ENCODE measurements at regions of chr2 and their contacts with region 1.

Region 1: DNA sequence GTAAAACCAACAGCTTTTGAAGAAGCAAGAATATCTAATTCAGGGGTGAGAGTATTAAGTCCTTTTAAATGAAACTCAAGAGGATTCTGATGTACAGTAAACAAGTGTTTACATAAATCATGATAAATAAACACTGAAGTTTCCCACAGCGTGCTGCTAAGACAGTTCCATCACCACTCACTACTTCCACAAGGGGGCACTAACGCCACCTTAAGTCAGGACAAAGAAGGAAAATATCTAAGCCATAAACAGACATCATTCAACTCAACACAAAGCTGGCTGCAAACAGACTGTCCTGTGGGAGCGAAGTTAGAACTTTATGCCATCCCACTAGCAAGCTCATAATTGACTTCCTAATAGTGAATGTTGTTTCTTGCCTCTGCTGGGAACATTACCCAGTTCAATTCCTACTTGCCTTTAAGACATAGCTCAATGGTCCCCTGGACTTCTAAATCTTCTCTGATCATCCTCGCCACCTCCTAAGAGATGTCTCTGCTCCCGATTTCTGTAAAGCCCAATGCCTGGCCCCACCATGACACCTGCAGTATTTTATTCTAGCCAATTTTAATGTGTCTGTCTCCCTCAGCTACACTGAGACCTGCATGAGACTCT is 36.5 kb downstream of the MRPL44 start:
- DNase-seq: peak; percentile 81 to 89 (median 82)
- H3K4me3 ChIP-seq: no peak overlapping the region
- H3K27ac ChIP-seq: no peak overlapping the region
- H3K4me1 ChIP-seq: peaks cover 0 to 2% (median 0%) of the 10 kb centered on the region in 4 experiments
- H3K27me3 ChIP-seq: no peaks in the 10 kb centered on the region

Region 2: GRCh38 chr2:223884399-223884798 is 109.3 kb before region 1 on chr2:
- CTCF ChIA-PET with region 1: no interaction called
- POLR2A ChIA-PET with region 1: no interaction called
- DNase-seq: no peak
- H3K4me3 ChIP-seq: no peak overlapping the region
- H3K27ac ChIP-seq: no peak overlapping the region
- H3K4me1 ChIP-seq: no peaks in the 10 kb centered on the region
- H3K27me3 ChIP-seq: no peaks in the 10 kb centered on the region

Region 3: DNA sequence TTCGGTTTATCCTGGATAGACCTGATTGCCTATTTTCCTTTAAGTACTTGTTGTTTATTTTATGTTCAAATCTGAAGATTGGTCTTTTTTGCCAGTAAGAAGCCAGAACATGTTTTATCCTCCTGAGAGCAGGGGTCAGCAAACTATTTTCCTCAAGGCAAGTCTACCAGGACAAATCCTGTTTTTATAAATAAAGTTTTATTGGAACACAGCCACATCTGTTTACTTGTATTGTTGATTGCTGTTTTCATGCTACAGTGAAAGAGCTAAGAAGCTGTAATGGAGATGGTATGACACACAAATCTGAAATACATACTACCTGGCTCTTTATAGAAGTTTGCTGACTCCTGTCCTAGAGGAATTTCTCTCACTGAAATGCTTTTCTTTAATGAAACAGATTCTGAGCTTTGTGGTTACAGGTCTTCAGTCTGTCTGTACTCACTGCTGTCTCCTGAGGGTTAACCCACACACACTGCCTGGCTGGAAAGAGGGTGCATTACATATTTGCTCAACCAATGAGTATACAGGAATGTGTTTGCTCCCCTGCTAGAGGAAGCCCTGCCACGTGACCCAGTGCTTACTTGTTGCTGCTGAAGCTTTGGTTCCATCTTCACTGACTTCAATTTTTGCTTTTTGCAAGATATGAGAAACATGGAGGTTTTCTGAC is 13.9 kb before region 1 on chr2:
- CTCF ChIA-PET with region 1: interaction called, 13 read pairs
- POLR2A ChIA-PET with region 1: no interaction called
- DNase-seq: no peak
- H3K4me3 ChIP-seq: no peak overlapping the region
- H3K27ac ChIP-seq: no peak overlapping the region
- H3K4me1 ChIP-seq: no peaks in the 10 kb centered on the region
- H3K27me3 ChIP-seq: no peaks in the 10 kb centered on the region

Region 4: DNA sequence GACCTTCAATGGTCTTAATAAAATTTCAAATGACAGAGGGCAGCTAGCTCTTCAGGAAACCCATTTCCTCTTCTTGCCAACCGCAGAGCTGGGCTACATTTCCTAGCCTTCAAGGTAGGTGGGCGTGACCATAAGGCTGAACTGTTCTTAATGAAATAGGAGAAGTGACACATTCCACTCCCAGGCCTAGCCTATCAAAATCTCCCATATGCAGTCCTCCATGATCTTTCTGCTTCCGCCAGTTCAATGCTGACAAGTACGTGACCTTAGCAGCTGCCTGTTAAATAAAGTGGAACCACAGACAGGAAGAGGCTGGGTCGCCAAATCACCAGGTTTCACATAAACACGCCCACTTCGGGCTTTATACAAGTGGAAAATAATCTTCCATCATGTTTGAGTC is 32.1 kb after region 1 on chr2:
- CTCF ChIA-PET with region 1: interaction called, 25 read pairs
- POLR2A ChIA-PET with region 1: no interaction called
- DNase-seq: peak; percentile 97 to 99 (median 98)
- H3K4me3 ChIP-seq: peak overlapping the region in 3 of 7 experiments; percentile 33 to 51 (median 35)
- H3K27ac ChIP-seq: peak overlapping the region in 1 of 2 experiments; percentile 71
- H3K4me1 ChIP-seq: peaks cover 17 to 47% (median 33%) of the 10 kb centered on the region in 4 experiments
- H3K27me3 ChIP-seq: no peaks in the 10 kb centered on the region

Region 5: GRCh38 chr2:224042191-224042696 is 48.5 kb after region 1 on chr2:
- CTCF ChIA-PET with region 1: interaction called, 12 read pairs
- POLR2A ChIA-PET with region 1: no interaction called
- DNase-seq: no peak
- H3K4me3 ChIP-seq: no peak overlapping the region
- H3K27ac ChIP-seq: no peak overlapping the region
- H3K4me1 ChIP-seq: peaks cover 10 to 22% (median 16%) of the 10 kb centered on the region in 4 experiments
- H3K27me3 ChIP-seq: peaks cover 0 to 5% (median 2%) of the 10 kb centered on the region in 5 experiments

Region 6: GRCh38 chr2:224284134-224284946 is 290.6 kb after region 1 on chr2:
- CTCF ChIA-PET with region 1: interaction called, 136 read pairs
- POLR2A ChIA-PET with region 1: no interaction called
- DNase-seq: peak; percentile 27 to 55 (median 31)
- H3K4me3 ChIP-seq: no peak overlapping the region
- H3K27ac ChIP-seq: no peak overlapping the region
- H3K4me1 ChIP-seq: no peaks in the 10 kb centered on the region
- H3K27me3 ChIP-seq: peaks cover 0 to 5% (median 0%) of the 10 kb centered on the region in 5 experiments